ENCODE measurements at regions of chr10 and their contacts with region 1.

Region 1: DNA sequence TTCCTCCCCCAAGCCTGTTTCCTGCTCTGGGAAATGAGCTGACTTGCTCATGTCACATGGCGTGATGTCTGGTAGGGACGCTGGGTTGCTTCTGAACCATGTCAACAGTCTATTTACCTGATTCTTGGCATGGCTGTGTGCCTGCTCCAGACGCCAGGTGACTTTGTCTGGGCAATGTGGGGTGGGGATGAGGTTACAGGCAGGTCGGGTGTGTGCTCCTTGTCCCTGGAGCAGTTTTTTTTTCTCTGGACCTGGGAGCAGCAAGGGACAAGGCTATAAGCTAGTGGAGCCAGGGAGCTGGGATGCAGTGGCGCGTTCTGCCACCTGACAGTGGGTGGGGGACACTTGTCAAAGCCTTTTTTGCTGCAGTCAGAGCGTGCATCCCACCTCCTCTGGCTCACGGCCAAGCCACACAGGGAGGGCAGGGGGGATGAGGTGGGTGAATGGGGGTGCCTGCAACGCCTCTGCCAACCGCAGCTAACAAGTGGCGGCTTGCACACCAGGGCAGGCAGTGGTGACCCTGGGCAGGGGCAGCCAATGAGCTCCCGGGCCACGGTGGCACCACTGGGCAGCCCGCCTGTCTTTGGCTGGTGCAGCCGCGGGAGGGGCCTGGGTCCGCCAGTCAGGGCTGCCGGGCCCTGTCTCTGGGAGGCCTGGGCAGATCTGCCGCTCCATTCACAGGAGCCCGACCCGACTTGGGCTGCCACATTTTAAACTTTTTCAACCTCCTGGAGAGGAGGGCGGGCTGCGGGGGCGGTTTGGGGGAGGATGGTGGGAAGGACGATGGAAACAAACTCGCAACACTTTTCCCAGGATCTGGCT is 22.9 kb downstream of the DNAJB12 start:
- DNase-seq: peak in 1 of 2 experiments; percentile 64
- ATAC-seq: peak in 1 of 2 experiments; percentile 34; a peak in 3 of 6 replicates
- H3K4me3 ChIP-seq: no peak overlapping the region
- H3K27ac ChIP-seq: peak overlapping the region; percentile 58 to 77
- H3K4me1 ChIP-seq: peaks cover 76% of the 10 kb centered on the region
- CTCF ChIP-seq: no peak
- EP300 ChIP-seq: no peak
- POLR2A ChIP-seq: no peak
- RAD21 ChIP-seq: no peak

Region 2: GRCh38 chr10:71957546-71958275 is 374.1 kb before region 1 on chr10:
- CTCF ChIA-PET with region 1: interaction called, 11 read pairs
- POLR2A ChIA-PET with region 1: no interaction called
- DNase-seq: peak in 1 of 2 experiments; percentile 47
- ATAC-seq: peak in 1 of 2 experiments; percentile 52; a peak in 3 of 6 replicates
- H3K4me3 ChIP-seq: no peak overlapping the region
- H3K27ac ChIP-seq: peak overlapping the region; percentile 72 to 84; a peak in 5 of 6 replicates
- H3K4me1 ChIP-seq: peaks cover 23% of the 10 kb centered on the region
- CTCF ChIP-seq: peak; percentile 23; the same call in 2 of the 3 replicates
- EP300 ChIP-seq: no peak
- POLR2A ChIP-seq: no peak
- RAD21 ChIP-seq: no peak

Region 3: DNA sequence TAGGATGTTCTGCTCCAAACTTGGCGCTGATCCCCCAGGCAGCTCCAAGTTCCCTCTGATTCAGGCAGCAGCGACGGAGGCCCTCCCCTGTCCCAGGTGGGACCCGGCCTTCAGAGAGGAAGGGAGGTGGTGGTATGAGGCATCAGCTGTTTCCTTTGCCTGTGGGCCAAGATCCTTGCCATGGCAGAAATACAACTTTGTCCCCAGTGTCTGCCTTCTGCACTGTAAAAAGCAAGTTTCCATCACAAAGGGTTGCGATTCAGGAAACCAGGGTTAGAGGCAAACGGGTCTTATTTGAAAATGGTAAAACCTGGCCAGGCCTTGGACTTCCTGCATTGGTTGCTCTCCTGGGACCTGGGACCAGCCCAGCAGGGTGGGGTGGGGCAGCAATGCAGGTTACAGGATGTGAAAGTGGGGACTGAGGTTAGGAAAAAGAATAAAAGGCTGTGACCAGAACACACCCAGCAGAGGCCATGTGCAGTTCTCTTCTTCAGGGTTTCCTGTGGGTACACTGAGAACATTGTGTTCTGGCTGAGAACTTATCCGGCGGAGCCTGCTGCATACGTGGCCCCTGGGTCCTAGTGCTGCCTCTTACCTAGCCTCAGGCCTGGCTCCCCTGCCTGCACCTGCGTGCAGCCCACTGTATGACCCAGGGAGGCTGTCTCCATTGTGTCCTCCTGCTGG is 83.2 kb before region 1 on chr10:
- CTCF ChIA-PET with region 1: interaction called, 18 read pairs
- POLR2A ChIA-PET with region 1: no interaction called
- DNase-seq: peak in 1 of 2 experiments; percentile 60
- ATAC-seq: peak; percentile 25 to 51; a peak in 4 of 6 replicates
- H3K4me3 ChIP-seq: peak overlapping the region; percentile 9; the same call in 2 of the 3 replicates
- H3K27ac ChIP-seq: peak overlapping the region; percentile 99 to 100
- H3K4me1 ChIP-seq: peaks cover 67% of the 10 kb centered on the region
- CTCF ChIP-seq: no peak
- EP300 ChIP-seq: no peak
- POLR2A ChIP-seq: peak; percentile 22; the same call in 1 of the 2 replicates
- RAD21 ChIP-seq: no peak; a peak in 1 of 5 replicates

Region 4: GRCh38 chr10:72292223-72292691 is 39.6 kb before region 1 on chr10:
- CTCF ChIA-PET with region 1: interaction called, 20 read pairs
- POLR2A ChIA-PET with region 1: interaction called, 6 read pairs
- DNase-seq: peak in 1 of 2 experiments; percentile 76
- ATAC-seq: peak; percentile 31 to 74
- H3K4me3 ChIP-seq: no peak overlapping the region
- H3K27ac ChIP-seq: peak overlapping the region; percentile 98 to 100
- H3K4me1 ChIP-seq: peaks cover 55% of the 10 kb centered on the region
- CTCF ChIP-seq: no peak
- EP300 ChIP-seq: peak in 1 of 2 experiments; percentile 33; a peak in 2 of 5 replicates
- POLR2A ChIP-seq: no peak
- RAD21 ChIP-seq: no peak

Region 5: GRCh38 chr10:72319416-72320254 is 12.2 kb before region 1 on chr10:
- CTCF ChIA-PET with region 1: interaction called, 44 read pairs
- POLR2A ChIA-PET with region 1: interaction called, 9 read pairs
- DNase-seq: peak; percentile 73 to 94
- ATAC-seq: peak; percentile 54 to 66
- H3K4me3 ChIP-seq: peak overlapping the region; percentile 27
- H3K27ac ChIP-seq: peak overlapping the region; percentile 98 to 99
- H3K4me1 ChIP-seq: peaks cover 92% of the 10 kb centered on the region
- CTCF ChIP-seq: no peak
- EP300 ChIP-seq: peak; percentile 93 to 98; a peak in 4 of 5 replicates
- POLR2A ChIP-seq: no peak
- RAD21 ChIP-seq: peak in 1 of 2 experiments; percentile 58; a peak in 3 of 5 replicates